ENCODE measurements at regions of chr15 and their contacts with region 1.

Region 1: GRCh38 chr15:60426870-60427508 is 29.2 kb upstream of the ANXA2 start:
- DNase-seq: no peak

Region 2: DNA sequence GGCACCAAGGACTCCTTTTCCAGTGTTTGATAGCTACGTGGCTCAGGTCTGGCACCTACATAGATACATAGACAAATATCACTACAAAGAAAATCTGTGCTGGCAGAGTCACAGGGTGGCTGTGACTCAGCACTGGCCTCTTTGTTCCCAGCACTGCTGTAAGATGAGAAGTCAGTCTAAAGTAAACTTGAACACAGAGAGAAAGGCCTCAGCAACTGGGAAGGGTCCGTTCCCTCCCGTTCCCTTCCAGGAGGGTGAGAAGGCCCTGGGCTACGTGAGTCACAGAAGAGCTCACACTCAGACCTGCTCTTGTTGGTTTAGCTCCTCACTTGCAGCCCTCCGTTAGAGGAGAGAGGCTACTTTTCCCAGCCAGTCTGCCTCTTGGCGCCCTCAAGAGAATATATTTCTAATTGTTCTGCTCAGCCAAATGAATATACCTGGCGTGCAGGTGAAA is 52.3 kb before region 1 on chr15:
- intact Hi-C with region 1: loop called (anchors 5 kb)
- DNase-seq: no peak

Region 3: DNA sequence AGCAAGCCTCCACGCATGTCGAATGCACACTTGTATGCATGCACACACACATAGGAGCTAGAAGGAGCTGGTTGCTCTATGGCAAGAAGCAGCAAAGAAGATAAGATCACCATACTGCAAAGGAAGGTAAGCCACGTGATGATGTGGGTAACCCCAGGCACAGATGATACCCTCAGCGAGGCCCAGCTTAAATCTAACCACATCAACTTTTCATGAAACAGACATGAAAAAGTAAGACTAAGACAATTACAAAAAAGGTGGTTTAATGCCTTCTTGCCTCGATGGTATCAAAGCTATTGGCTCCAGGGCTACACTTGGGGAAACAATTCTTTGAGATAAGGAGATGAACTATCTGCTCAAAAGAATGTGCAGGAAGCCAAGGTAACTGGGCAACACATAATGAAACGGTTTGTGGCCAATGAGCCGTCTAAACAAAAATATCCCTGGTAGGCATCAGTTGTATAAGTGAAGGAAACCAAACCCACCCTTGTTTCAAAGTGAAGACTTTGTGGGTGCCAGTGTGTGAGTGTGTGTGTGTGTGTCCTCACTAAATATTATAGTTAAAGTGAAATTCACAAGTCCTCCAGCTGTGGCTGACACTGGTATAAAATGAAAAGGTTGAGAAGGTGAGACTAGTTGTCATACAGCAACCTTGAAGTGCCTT is 417.7 kb after region 1 on chr15:
- intact Hi-C with region 1: no loop called
- DNase-seq: no peak

Measured in cardiac septum (tissue), 1 donor.